CD4-positive, alpha-beta T cell (primary cell): ENCODE measurements at regions of chr3 and their contacts with region 1.

Region 1: DNA sequence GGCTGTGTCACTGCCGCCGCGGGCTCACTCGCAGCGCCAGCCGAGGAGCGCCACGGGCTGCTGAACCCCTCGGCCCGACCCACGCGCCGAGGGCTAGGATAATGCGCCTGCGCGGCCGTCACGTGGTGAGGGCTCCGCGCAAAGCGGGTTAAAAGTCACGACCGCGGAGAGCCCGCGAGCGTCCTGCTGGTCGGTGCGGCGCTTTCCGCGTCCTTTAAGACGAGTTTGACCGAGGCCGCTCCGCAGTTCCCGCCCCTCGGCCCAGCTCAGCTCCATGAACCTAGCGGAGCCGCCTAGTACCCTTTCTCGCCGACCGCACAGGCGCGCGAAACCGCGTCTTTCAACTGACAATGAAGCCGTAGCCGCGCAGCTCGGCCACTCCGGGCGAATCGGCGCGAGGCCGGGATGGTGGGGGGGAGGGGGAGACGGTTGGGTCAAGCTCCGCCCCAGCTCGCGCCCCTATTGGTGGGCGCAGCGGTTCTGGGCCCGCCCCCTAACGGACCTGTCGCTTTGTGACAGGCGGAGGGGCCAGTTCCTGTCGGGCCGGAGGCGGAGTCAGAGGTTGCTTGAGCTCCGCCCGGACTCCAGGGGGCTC is 636 bp upstream of the STT3B start:
- DNase-seq: peak; percentile 97 to 99 (median 98)
- ATAC-seq: peak; percentile 83
- H3K4me3 ChIP-seq: peak overlapping the region; percentile 91
- H3K4me3 Mint-ChIP-seq: peak overlapping the region; percentile 97
- H3K27ac ChIP-seq: peak overlapping the region; percentile 97 to 98
- H3K27ac Mint-ChIP-seq: peak overlapping the region; percentile 96
- H3K4me1 ChIP-seq: peaks cover 14% of the 10 kb centered on the region
- H3K4me1 Mint-ChIP-seq: peaks cover 27% of the 10 kb centered on the region
- H3K27me3 ChIP-seq: no peaks in the 10 kb centered on the region
- H3K27me3 Mint-ChIP-seq: no peaks in the 10 kb centered on the region
- CTCF ChIP-seq: no peak

Region 2: DNA sequence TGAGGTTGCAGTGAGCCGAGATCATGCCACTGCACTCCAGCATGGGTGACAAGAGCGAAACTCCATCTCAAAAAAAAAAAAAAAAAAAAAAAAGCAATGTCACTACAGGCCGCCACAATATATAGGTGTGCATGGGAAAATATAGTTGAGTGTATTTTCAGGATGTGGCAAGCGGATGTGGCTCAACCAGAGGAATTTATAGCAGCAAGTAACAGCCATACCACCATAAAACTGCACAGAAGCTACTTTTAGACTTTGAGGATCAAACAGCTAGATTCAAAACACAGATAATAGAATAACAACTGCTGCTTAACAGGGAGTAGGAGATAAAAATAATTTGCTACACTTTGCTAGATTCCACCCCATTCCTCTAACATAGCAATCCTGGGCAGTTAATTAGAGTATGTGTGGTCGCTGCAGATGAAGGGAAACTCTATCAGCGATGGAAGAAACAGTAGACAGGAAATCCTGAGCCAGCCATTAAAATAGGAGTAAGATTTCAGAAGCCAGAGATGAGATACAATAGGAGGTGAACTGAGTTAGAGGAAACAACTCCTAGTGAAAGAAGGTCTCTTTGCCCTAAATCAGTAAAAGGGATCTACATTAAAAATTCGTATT is 318.1 kb before region 1 on chr3:
- CTCF ChIA-PET with region 1: no interaction called
- POLR2A ChIA-PET with region 1: interaction called, 26 read pairs
- intact Hi-C with region 1: loop called (anchors 5 to 10 kb)
- DNase-seq: peak in 8 of 14 experiments; percentile 11 to 89 (median 44)
- ATAC-seq: peak; percentile 75
- H3K4me3 ChIP-seq: no peak overlapping the region
- H3K4me3 Mint-ChIP-seq: peak overlapping the region; percentile 77
- H3K27ac ChIP-seq: peak overlapping the region in 1 of 2 donors; percentile 11
- H3K27ac Mint-ChIP-seq: peak overlapping the region; percentile 76
- H3K4me1 ChIP-seq: peaks cover 56% of the 10 kb centered on the region
- H3K4me1 Mint-ChIP-seq: peaks cover 100% of the 10 kb centered on the region
- H3K27me3 ChIP-seq: no peaks in the 10 kb centered on the region
- H3K27me3 Mint-ChIP-seq: no peaks in the 10 kb centered on the region
- CTCF ChIP-seq: no peak

Region 3: DNA sequence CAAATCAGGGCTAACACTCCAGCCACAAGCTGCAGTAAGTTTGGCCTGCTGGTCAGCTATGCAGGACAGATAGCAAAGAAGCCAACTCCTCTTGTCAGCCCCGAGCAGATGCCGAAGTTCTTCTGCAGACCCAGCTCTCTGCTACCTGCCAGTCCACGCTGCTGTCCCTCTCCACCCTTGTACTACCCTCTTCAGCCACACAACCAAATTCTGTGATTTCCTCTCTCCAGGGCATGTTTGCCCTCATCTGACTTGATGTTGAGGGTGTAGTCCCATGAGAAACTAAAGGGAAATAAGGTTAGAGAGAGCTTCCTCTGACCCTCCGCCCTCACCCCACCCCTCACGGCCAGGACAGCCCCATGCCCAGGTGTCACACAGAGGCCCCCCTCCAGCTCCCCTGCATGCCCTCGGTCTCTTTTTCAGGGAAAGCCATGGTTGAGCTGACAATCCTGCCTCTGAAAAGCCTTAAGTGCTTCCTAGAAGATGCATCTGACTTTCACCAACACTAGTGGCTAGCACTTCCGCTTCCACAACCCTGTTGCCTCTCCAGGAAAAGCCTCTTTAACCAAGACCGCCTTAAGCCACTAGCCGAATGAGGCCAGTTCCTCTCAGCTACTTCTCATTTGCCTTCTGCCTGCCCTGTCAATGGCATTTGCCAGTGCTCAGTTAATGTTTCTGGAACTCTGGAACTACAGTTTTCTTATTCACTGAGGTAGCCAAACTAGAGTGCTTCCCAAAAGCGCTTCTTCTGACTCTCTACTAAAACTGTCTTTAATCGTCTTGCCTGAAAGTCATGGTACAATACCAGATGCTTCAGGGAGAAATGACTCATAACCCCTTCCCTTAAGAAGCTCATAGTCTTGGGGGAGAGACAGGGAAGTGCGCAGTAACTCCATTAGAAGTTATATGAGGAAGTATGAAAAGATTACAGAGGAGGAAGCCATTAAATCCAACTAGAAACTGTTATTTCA is 299.7 kb before region 1 on chr3:
- CTCF ChIA-PET with region 1: no interaction called
- POLR2A ChIA-PET with region 1: interaction called, 102 read pairs
- intact Hi-C with region 1: no loop called
- DNase-seq: peak in 3 of 14 experiments; percentile 25 to 57 (median 48)
- ATAC-seq: no peak
- H3K4me3 ChIP-seq: no peak overlapping the region
- H3K4me3 Mint-ChIP-seq: peak overlapping the region; percentile 36
- H3K27ac ChIP-seq: peak overlapping the region in 1 of 2 donors; percentile 52
- H3K27ac Mint-ChIP-seq: peak overlapping the region; percentile 75
- H3K4me1 ChIP-seq: peaks cover 74% of the 10 kb centered on the region
- H3K4me1 Mint-ChIP-seq: peaks cover 81% of the 10 kb centered on the region
- H3K27me3 ChIP-seq: no peaks in the 10 kb centered on the region
- H3K27me3 Mint-ChIP-seq: no peaks in the 10 kb centered on the region
- CTCF ChIP-seq: no peak

Region 4: DNA sequence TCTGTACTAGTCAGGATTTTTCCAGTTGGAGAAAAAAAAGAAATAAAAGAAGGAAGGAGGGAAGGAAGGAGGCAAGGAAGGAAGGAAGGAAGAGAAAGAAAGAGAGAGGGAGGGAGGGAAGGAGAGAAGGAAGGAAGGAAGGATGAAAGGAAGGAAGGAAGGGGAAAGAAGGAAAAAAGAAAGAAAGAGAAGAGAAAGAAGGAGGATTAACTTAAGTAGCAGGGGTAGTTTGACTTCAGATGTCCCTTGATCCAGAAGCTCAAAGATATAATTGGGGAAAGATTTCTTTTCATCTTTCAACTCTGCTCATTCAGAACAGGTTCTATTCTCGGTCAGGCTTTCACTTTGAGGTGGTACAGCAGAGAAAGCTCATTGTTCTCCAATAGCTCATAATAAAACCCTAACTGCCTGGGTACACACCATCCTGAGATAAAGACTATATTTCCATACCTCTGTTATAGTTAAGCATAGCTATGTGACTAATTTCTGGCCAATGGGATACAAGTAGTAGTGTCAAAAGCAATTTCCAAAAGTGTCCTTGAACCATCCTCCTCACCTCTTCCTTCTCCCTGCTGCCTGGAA is 22.9 kb before region 1 on chr3:
- CTCF ChIA-PET with region 1: no interaction called
- POLR2A ChIA-PET with region 1: interaction called, 24 read pairs
- intact Hi-C with region 1: no loop called
- DNase-seq: no peak
- ATAC-seq: no peak
- H3K4me3 ChIP-seq: no peak overlapping the region
- H3K4me3 Mint-ChIP-seq: no peak overlapping the region
- H3K27ac ChIP-seq: no peak overlapping the region
- H3K27ac Mint-ChIP-seq: peak overlapping the region; percentile 39
- H3K4me1 ChIP-seq: peaks cover 28% of the 10 kb centered on the region
- H3K4me1 Mint-ChIP-seq: peaks cover 48% of the 10 kb centered on the region
- H3K27me3 ChIP-seq: no peaks in the 10 kb centered on the region
- H3K27me3 Mint-ChIP-seq: no peaks in the 10 kb centered on the region
- CTCF ChIP-seq: no peak

Region 5: GRCh38 chr3:31567036-31567435 is 34.9 kb after region 1 on chr3:
- CTCF ChIA-PET with region 1: interaction called, 5 read pairs
- POLR2A ChIA-PET with region 1: interaction called, 15 read pairs
- intact Hi-C with region 1: loop called (anchors 5 kb)
- DNase-seq: peak in 5 of 14 experiments; percentile 8 to 66 (median 45)
- ATAC-seq: peak; percentile 78
- H3K4me3 ChIP-seq: no peak overlapping the region
- H3K4me3 Mint-ChIP-seq: peak overlapping the region; percentile 68
- H3K27ac ChIP-seq: no peak overlapping the region
- H3K27ac Mint-ChIP-seq: peak overlapping the region; percentile 53
- H3K4me1 ChIP-seq: peaks cover 27% of the 10 kb centered on the region
- H3K4me1 Mint-ChIP-seq: peaks cover 93% of the 10 kb centered on the region
- H3K27me3 ChIP-seq: no peaks in the 10 kb centered on the region
- H3K27me3 Mint-ChIP-seq: no peaks in the 10 kb centered on the region
- CTCF ChIP-seq: peak; percentile 74

Region 6: DNA sequence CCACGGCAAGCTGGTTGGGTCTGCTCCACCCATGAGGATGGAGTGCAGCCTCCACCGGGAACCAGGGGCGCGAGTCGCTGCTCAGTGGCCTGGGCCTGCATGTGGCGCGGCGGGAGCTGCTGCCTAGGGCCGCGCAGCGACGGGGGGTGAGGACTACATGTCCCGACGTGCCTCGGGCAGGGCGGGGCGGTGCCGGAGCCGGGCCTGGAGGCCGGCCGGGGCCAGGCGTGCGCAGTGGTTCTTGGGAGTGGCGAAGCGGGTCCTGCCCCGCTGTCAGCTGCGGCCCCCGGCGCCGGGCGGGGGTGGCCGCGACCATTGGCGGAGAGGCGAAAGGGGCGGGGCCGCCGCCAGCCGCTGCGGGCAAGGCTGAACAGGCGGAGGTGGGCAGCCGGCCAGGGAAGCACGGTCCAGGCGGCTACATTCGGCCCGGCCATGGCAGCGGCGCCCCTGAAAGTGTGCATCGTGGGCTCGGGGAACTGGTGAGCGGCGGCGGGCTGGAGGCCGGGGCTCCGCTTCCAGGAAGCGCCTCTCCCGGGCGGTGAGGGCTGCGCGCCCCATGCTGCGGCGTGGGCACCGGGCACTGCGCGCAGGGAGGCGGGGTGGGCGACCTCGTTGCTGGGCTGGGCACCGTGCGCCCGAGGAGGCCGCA is 574.3 kb after region 1 on chr3 and contains the start of gene GPD1L:
- CTCF ChIA-PET with region 1: no interaction called
- POLR2A ChIA-PET with region 1: interaction called, 4 read pairs
- intact Hi-C with region 1: loop called (anchors 5 to 10 kb)
- DNase-seq: peak; percentile 76 to 96 (median 90)
- ATAC-seq: peak; percentile 97
- H3K4me3 ChIP-seq: peak within 1 kb of the TSS; percentile 80
- H3K4me3 Mint-ChIP-seq: peak within 1 kb of the TSS; percentile 97
- H3K27ac ChIP-seq: peak within 1 kb of the TSS; percentile 21 to 29
- H3K27ac Mint-ChIP-seq: peak within 1 kb of the TSS; percentile 66
- H3K4me1 ChIP-seq: peaks cover 39% of the 10 kb centered on the region
- H3K4me1 Mint-ChIP-seq: peaks cover 34% of the 10 kb centered on the region
- H3K27me3 ChIP-seq: no peaks in the 10 kb centered on the region
- H3K27me3 Mint-ChIP-seq: no peaks in the 10 kb centered on the region
- CTCF ChIP-seq: no peak
- total RNA-seq, gene GPD1L: 15.3 to 16.0 TPM

Region 7: DNA sequence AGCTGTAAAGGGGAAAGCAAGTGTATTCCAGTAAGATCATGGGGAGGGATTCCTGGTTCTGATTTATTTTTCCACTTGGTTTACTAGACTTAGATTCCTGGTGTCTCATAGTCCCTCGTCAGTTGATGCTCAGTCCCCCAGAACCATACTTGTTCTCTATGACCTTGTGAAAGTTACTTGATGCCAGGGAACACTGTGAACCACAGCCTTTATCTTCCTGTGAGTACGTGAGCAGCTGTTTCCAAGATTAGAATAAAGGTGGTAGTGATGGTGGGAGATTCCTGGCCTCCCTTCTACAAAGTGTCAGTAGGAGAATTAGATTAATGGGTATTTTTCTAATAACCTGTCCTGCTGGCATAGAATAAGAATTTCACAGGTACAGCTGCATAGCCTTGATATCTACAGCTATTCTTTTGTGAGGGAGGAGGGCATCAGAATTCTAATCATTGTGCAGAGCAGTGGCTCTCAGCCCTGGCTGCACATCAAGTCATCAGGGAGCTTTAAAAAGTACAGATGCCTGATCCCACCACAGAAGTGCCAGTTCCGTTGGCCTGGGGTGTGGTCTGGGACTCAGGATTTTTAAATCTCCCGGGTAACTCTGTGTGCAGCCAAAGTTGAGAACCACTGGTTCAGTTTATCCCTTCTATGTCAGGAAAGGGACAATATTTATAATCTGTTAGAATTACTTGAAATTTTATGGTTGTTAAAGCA is 594.4 kb after region 1 on chr3:
- CTCF ChIA-PET with region 1: no interaction called
- POLR2A ChIA-PET with region 1: no interaction called
- intact Hi-C with region 1: no loop called
- DNase-seq: no peak
- ATAC-seq: no peak
- H3K4me3 ChIP-seq: no peak overlapping the region
- H3K4me3 Mint-ChIP-seq: no peak overlapping the region
- H3K27ac ChIP-seq: no peak overlapping the region
- H3K27ac Mint-ChIP-seq: no peak overlapping the region
- H3K4me1 ChIP-seq: no peaks in the 10 kb centered on the region
- H3K4me1 Mint-ChIP-seq: peaks cover 21% of the 10 kb centered on the region
- H3K27me3 ChIP-seq: no peaks in the 10 kb centered on the region
- H3K27me3 Mint-ChIP-seq: no peaks in the 10 kb centered on the region
- CTCF ChIP-seq: no peak

Region 8: GRCh38 chr3:33063651-33064051 is 1531.6 kb after region 1 on chr3:
- CTCF ChIA-PET with region 1: no interaction called
- POLR2A ChIA-PET with region 1: no interaction called
- intact Hi-C with region 1: loop called in 1 of 2 experiments (anchors 5 kb)
- DNase-seq: peak in 11 of 14 experiments; percentile 37 to 70 (median 51)
- ATAC-seq: peak; percentile 41
- H3K4me3 ChIP-seq: no peak overlapping the region
- H3K4me3 Mint-ChIP-seq: peak overlapping the region; percentile 69
- H3K27ac ChIP-seq: peak overlapping the region; percentile 27 to 41
- H3K27ac Mint-ChIP-seq: peak overlapping the region; percentile 94
- H3K4me1 ChIP-seq: peaks cover 63% of the 10 kb centered on the region
- H3K4me1 Mint-ChIP-seq: peaks cover 68% of the 10 kb centered on the region
- H3K27me3 ChIP-seq: no peaks in the 10 kb centered on the region
- H3K27me3 Mint-ChIP-seq: no peaks in the 10 kb centered on the region
- CTCF ChIP-seq: no peak